PC-3 (cell line): ENCODE measurements at regions of chr3 and their contacts with region 1.

Region 1: DNA sequence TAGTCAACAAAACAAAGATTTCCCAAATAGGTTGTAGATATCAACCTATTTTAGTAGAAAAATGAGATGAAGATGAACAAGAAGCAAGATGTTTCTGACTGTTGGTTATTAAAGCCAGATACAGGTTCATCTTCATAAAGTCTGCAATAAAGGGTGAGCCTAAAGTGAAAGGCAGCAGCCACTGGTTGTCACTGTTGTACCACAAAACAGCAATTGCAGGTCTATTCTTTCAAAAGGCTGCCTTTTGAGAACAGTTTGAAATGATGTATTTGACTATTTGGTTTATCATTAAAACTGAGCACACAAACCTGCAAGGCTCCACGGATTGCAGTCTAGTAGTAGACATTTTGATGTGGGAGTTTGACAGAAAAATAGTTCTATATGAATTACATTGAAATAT is 543.4 kb downstream of the GBE1 start:
- DNase-seq: peak; percentile 73
- ATAC-seq: peak; percentile 65
- H3K4me3 ChIP-seq: no peak overlapping the region
- H3K27ac ChIP-seq: no peak overlapping the region
- H3K4me1 ChIP-seq: peaks cover 19% of the 10 kb centered on the region
- H3K27me3 ChIP-seq: no peaks in the 10 kb centered on the region
- CTCF ChIP-seq: peak; percentile 87

Region 2: DNA sequence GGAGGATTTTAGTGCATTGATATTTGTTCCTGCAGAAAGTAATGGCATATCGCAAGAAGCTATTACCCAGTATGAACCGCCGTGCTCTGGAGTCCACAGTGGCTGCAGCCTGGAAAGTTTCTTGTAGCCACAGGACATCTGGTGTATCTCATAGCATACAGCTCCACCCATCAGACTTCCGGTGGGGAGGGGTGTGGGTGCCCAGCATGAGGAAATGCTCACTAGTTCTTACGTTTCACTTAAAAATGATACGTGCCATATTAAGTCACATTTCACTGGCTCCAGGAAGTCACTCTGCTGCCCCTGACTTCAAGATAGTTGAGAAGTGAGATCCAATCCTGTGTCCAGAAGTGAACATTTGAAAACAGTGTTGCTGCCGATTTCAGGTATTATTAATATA is 446.9 kb before region 1 on chr3:
- CTCF ChIA-PET with region 1: no interaction called
- POLR2A ChIA-PET with region 1: no interaction called
- intact Hi-C with region 1: loop called (anchors 1 kb)
- DNase-seq: peak; percentile 64
- ATAC-seq: peak; percentile 64
- H3K4me3 ChIP-seq: peak overlapping the region; percentile 79
- H3K27ac ChIP-seq: peak overlapping the region; percentile 38
- H3K4me1 ChIP-seq: 0 out of 2 replicates have a peak, but pooled peaks cover 6% of the 10 kb centered on the region
- H3K27me3 ChIP-seq: no peaks in the 10 kb centered on the region
- CTCF ChIP-seq: no peak

Region 3: GRCh38 chr3:81027344-81027743 is 190.7 kb before region 1 on chr3:
- CTCF ChIA-PET with region 1: no interaction called
- POLR2A ChIA-PET with region 1: no interaction called
- intact Hi-C with region 1: no loop called
- DNase-seq: no peak
- ATAC-seq: no peak
- H3K4me3 ChIP-seq: no peak overlapping the region
- H3K27ac ChIP-seq: no peak overlapping the region
- H3K4me1 ChIP-seq: no peaks in the 10 kb centered on the region
- H3K27me3 ChIP-seq: no peaks in the 10 kb centered on the region
- CTCF ChIP-seq: no peak

Region 4: GRCh38 chr3:81105789-81106488 is 112.1 kb before region 1 on chr3:
- CTCF ChIA-PET with region 1: no interaction called
- POLR2A ChIA-PET with region 1: no interaction called
- intact Hi-C with region 1: loop called (anchors 1 kb)
- DNase-seq: peak; percentile 87
- ATAC-seq: peak; percentile 94
- H3K4me3 ChIP-seq: no peak overlapping the region; the same call in 1 of the 2 replicates
- H3K27ac ChIP-seq: peak overlapping the region; percentile 42
- H3K4me1 ChIP-seq: peaks cover 17% of the 10 kb centered on the region
- H3K27me3 ChIP-seq: no peaks in the 10 kb centered on the region
- CTCF ChIP-seq: no peak

Region 5: GRCh38 chr3:81249540-81250029 is 31.6 kb after region 1 on chr3:
- CTCF ChIA-PET with region 1: no interaction called
- POLR2A ChIA-PET with region 1: no interaction called
- intact Hi-C with region 1: loop called (anchors 2 kb)
- DNase-seq: peak; percentile 99
- ATAC-seq: peak; percentile 98
- H3K4me3 ChIP-seq: peak overlapping the region; percentile 26; the same call in 1 of the 2 replicates
- H3K27ac ChIP-seq: peak overlapping the region; percentile 60
- H3K4me1 ChIP-seq: peaks cover 23% of the 10 kb centered on the region
- H3K27me3 ChIP-seq: no peaks in the 10 kb centered on the region
- CTCF ChIP-seq: no peak

Region 6: GRCh38 chr3:81338676-81339555 is 120.9 kb after region 1 on chr3:
- CTCF ChIA-PET with region 1: no interaction called
- POLR2A ChIA-PET with region 1: no interaction called
- intact Hi-C with region 1: loop called (anchors 1 kb)
- DNase-seq: peak; percentile 88
- ATAC-seq: peak; percentile 85
- H3K4me3 ChIP-seq: peak overlapping the region; percentile 8; the same call in 1 of the 2 replicates
- H3K27ac ChIP-seq: peak overlapping the region; percentile 3
- H3K4me1 ChIP-seq: peaks cover 24% of the 10 kb centered on the region
- H3K27me3 ChIP-seq: no peaks in the 10 kb centered on the region
- CTCF ChIP-seq: peak; percentile 92

Region 7: DNA sequence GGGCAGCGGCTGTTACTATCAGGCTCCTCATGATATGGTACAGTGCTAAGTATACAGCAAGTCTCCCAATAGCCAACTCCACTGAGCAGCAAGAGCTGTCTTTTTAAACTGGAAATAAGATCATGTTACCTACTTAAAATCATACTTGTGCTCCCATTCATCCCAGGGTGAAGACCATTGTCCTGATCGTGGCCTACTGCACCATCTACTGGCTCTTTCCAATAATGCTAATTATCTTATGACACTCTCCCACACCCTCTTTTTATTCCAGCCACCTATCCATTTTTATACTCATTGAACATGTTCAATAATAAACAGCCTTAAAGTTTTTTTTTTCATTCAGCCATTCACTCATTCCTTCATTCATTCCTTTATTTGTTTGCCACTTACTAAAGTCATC is 425.7 kb after region 1 on chr3:
- CTCF ChIA-PET with region 1: no interaction called
- POLR2A ChIA-PET with region 1: no interaction called
- intact Hi-C with region 1: loop called (anchors 5 kb)
- DNase-seq: peak; percentile 58
- ATAC-seq: peak; percentile 85
- H3K4me3 ChIP-seq: no peak overlapping the region
- H3K27ac ChIP-seq: no peak overlapping the region
- H3K4me1 ChIP-seq: peaks cover 9% of the 10 kb centered on the region; the same call in 1 of the 2 replicates
- H3K27me3 ChIP-seq: no peaks in the 10 kb centered on the region
- CTCF ChIP-seq: peak; percentile 74

Region 8: DNA sequence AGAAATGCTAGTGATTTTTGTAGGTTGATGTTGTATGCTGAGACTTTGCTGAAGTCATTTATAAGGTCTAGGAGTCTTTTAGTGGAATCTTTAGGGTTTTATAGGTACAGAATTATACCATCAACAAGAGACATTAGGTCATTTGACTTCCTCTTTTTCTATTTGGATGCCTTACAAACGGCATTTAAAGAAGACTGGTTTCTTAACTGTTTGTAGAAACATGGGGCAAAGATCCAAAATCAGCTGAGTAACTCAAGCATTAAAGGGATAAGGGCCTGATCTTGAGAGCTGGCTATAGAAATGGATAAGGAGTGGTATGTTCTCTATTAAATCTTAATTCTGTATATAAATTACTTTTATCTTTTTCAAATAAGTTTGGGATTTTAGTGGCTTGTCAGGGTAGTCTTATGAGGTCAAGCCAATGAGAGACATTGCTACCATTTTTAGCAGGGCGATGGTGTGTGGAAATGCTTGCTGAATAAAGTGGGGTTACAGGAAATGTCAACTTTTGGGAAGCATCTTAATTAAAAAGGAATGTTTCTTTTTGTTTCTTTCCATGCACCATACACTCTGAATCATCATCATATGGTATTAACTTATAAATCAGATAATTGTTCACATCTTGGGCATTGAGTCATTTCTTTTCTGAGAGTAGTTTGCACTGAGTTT is 741.1 kb after region 1 on chr3:
- CTCF ChIA-PET with region 1: no interaction called
- POLR2A ChIA-PET with region 1: no interaction called
- intact Hi-C with region 1: no loop called
- DNase-seq: no peak
- ATAC-seq: no peak
- H3K4me3 ChIP-seq: no peak overlapping the region
- H3K27ac ChIP-seq: no peak overlapping the region
- H3K4me1 ChIP-seq: peaks cover 9% of the 10 kb centered on the region; the same call in 1 of the 2 replicates
- H3K27me3 ChIP-seq: no peaks in the 10 kb centered on the region
- CTCF ChIP-seq: no peak